ENCODE measurements at regions of chr6 and their contacts with region 1.

Region 1: GRCh38 chr6:44475779-44476434 is 88.4 kb downstream of the CDC5L start:
- DNase-seq: no peak
- H3K4me3 ChIP-seq: no peak overlapping the region
- H3K27me3 ChIP-seq: 0 out of 2 replicates have a peak, but pooled peaks cover 2% of the 10 kb centered on the region
- CTCF ChIP-seq: peak; percentile 98

Region 2: DNA sequence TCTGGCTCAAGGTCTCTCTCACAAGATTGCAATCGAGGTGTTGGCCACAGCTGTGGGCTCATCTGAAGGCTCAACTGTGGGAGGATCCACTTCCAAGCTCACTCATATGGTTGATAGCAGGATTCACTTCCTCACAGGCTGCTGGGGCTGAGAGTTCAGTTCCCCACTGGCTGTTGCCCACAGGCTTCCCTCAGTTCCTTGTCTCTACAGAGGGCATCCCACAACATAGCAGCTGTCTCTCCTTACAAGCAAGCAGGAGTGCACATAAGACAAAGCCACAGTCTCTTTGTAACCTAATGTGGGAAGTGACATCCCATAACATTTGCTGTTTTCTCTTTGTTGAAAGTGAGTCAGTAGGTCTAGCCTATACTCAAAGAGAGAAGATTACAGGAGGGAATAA is 119.4 kb before region 1 on chr6:
- CTCF ChIA-PET with region 1: no interaction called
- POLR2A ChIA-PET with region 1: no interaction called
- DNase-seq: no peak
- H3K4me3 ChIP-seq: no peak overlapping the region
- H3K27me3 ChIP-seq: peaks cover 10% of the 10 kb centered on the region
- CTCF ChIP-seq: no peak

Region 3: GRCh38 chr6:44423306-44423705 is 52.6 kb before region 1 on chr6:
- CTCF ChIA-PET with region 1: no interaction called
- POLR2A ChIA-PET with region 1: no interaction called
- DNase-seq: no peak
- H3K4me3 ChIP-seq: no peak overlapping the region
- H3K27me3 ChIP-seq: no peaks in the 10 kb centered on the region
- CTCF ChIP-seq: no peak

Region 4: DNA sequence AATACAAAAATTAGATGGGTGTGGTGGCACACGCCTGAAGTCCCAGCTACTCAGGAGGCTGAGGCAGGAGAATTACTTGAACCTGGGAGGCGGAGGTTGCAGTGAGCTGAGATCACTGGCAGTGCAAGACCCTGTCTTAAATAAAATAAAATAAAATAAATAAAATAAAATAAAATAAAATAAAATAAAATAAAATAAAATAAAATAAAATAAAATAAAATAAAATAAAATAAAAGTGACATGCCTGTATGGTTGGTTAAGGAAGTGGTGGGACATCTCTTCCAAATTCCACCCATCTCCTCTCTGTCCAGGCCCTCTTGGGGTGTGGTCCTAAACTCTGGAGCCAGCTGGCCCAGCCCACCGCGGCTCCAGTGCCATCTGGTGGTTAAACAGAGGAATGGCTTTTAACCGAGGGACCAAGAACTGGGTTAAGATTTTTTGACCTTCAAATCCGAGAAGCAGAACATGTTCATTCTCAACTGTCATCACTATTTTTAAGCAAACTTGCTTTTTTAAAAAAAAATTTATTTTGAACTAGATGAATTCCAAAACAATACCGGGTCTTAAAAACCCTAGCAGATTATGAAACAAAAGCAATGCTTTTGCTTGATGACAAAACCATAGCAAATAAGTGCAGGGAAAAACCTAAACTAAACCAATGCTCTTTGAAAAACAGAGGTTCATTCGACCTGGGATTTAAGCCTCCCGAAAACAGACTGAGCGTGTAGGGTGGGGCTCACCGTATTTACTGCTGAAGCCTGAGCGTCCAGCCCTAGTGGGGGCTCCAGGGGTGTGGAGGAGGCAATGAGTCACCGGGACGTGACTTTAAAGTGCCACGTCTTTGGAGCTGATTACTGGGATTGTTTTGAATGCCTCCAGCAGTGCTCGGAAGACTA is 19.6 kb before region 1 on chr6:
- CTCF ChIA-PET with region 1: interaction called, 36 read pairs
- POLR2A ChIA-PET with region 1: no interaction called
- DNase-seq: no peak
- H3K4me3 ChIP-seq: no peak overlapping the region
- H3K27me3 ChIP-seq: no peaks in the 10 kb centered on the region
- CTCF ChIP-seq: peak; percentile 87

Region 5: GRCh38 chr6:44508646-44509045 is 32.7 kb after region 1 on chr6:
- CTCF ChIA-PET with region 1: interaction called, 11 read pairs
- POLR2A ChIA-PET with region 1: no interaction called
- DNase-seq: peak; percentile 31
- H3K4me3 ChIP-seq: no peak overlapping the region
- H3K27me3 ChIP-seq: peaks cover 11% of the 10 kb centered on the region
- CTCF ChIP-seq: no peak

Region 6: GRCh38 chr6:44630125-44631028 is 154.5 kb after region 1 on chr6:
- CTCF ChIA-PET with region 1: interaction called, 36 read pairs
- POLR2A ChIA-PET with region 1: no interaction called
- DNase-seq: no peak
- H3K4me3 ChIP-seq: no peak overlapping the region
- H3K27me3 ChIP-seq: peaks cover 7% of the 10 kb centered on the region
- CTCF ChIP-seq: peak; percentile 83

Region 7: GRCh38 chr6:44655412-44656342 is 179.8 kb after region 1 on chr6:
- CTCF ChIA-PET with region 1: interaction called, 41 read pairs
- POLR2A ChIA-PET with region 1: no interaction called
- DNase-seq: no peak
- H3K4me3 ChIP-seq: no peak overlapping the region
- H3K27me3 ChIP-seq: no peaks in the 10 kb centered on the region
- CTCF ChIP-seq: peak; percentile 96

Region 8: GRCh38 chr6:45714741-45715507 is 1239.0 kb after region 1 on chr6:
- CTCF ChIA-PET with region 1: interaction called, 16 read pairs
- POLR2A ChIA-PET with region 1: no interaction called
- DNase-seq: no peak
- H3K4me3 ChIP-seq: no peak overlapping the region
- H3K27me3 ChIP-seq: no peaks in the 10 kb centered on the region
- CTCF ChIP-seq: peak; percentile 86

Measured in BJ (cell line).